ENCODE measurements at regions of chr11 and their contacts with region 1.

Region 1: GRCh38 chr11:60855726-60856633 is at the start of gene PTGDR2:
- DNase-seq: peak; percentile 71
- ATAC-seq: peak; percentile 83
- H3K4me3 ChIP-seq: peak within 1 kb of the TSS; percentile 21 to 49 (median 41)
- H3K27ac ChIP-seq: peak within 1 kb of the TSS; percentile 72
- H3K4me1 ChIP-seq: peaks cover 67% of the 10 kb centered on the region
- H3K27me3 ChIP-seq: no peaks in the 10 kb centered on the region
- CTCF ChIP-seq: 0 out of 2 replicates have a peak, but pooled peaks have one; percentile 5
- EP300 ChIP-seq: peak in 1 of 2 experiments; percentile 22; a peak in 1 of 4 replicates
- POLR2A ChIP-seq: 0 out of 4 replicates have a peak, but pooled peaks of 1 of the 2 experiments have one; percentile 29
- RAD21 ChIP-seq: no peak
- total RNA-seq, gene PTGDR2: 1.0 and 2.5 TPM in 2 replicates

Region 2: DNA sequence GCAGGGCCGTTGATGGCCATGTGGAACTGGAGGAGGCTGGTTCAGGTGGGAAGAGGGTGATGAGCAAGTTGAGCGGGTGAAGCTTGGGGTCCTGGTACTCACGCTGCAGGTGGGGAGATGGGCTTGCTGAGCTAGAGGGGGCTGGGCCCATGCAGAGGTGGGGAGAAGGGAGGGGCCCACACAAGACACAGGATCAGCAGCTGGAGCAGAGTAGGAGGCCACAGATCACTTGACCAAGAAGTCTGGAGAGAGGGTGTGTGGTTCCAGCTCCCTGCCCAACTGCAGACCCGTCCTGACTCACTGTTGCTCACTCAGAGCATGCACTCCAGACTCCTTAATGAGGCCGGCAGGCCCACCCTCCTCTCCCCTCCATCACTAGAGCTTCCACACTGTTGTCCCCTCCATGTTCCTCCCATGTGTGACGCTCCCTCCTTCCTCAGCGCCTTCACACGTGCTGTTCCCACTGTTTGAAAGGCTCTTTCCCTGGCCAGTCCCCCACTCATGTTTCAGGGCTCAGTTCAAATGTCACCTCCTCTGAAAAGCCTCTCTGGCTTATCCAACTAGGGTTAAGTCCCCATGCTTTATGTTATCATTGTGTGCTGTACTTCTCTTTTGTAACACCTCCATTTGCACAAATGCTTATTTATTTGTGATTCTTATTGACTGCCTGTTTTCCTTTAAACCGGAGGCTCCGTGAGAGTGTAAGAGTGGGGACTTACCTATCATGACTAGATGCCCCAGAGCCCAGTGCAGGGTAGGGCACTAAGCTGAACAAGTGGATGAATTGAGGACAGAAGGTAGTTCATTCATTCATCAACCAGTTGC is 11.7 kb before region 1 on chr11:
- CTCF ChIA-PET with region 1: no interaction called
- POLR2A ChIA-PET with region 1: interaction called, 26 read pairs
- in situ Hi-C with region 1: no loop called
- intact Hi-C with region 1: loop called (anchors 1 kb)
- DNase-seq: no peak
- ATAC-seq: peak; percentile 53
- H3K4me3 ChIP-seq: peak overlapping the region; percentile 80 to 97 (median 88)
- H3K27ac ChIP-seq: peak overlapping the region; percentile 68
- H3K4me1 ChIP-seq: peaks cover 41% of the 10 kb centered on the region
- H3K27me3 ChIP-seq: no peaks in the 10 kb centered on the region; a peak in 1 of 5 replicates
- CTCF ChIP-seq: no peak
- EP300 ChIP-seq: no peak
- POLR2A ChIP-seq: no peak
- RAD21 ChIP-seq: no peak

Region 3: GRCh38 chr11:60870276-60870675 is 14.3 kb after region 1 on chr11:
- CTCF ChIA-PET with region 1: no interaction called
- POLR2A ChIA-PET with region 1: no interaction called
- in situ Hi-C with region 1: no loop called
- intact Hi-C with region 1: no loop called
- DNase-seq: no peak
- ATAC-seq: no peak
- H3K4me3 ChIP-seq: no peak overlapping the region
- H3K27ac ChIP-seq: no peak overlapping the region
- H3K4me1 ChIP-seq: peaks cover 48% of the 10 kb centered on the region
- H3K27me3 ChIP-seq: peaks cover 0 to 5% of the 10 kb centered on the region in 2 experiments; a peak in 1 of 5 replicates
- CTCF ChIP-seq: no peak
- EP300 ChIP-seq: no peak
- POLR2A ChIP-seq: no peak
- RAD21 ChIP-seq: no peak

Region 4: GRCh38 chr11:60880643-60881282 is 24.8 kb after region 1 on chr11:
- CTCF ChIA-PET with region 1: no interaction called
- POLR2A ChIA-PET with region 1: interaction called, 5 read pairs
- in situ Hi-C with region 1: no loop called
- intact Hi-C with region 1: loop called (anchors 1 kb)
- DNase-seq: peak; percentile 96
- ATAC-seq: peak; percentile 100
- H3K4me3 ChIP-seq: 0 out of 6 replicates have a peak overlapping the region, but pooled peaks of 1 of the 3 experiments have one; percentile 11
- H3K27ac ChIP-seq: peak overlapping the region; percentile 16
- H3K4me1 ChIP-seq: peaks cover 25% of the 10 kb centered on the region
- H3K27me3 ChIP-seq: no peaks in the 10 kb centered on the region
- CTCF ChIP-seq: 0 out of 2 replicates have a peak, but pooled peaks have one; percentile 17
- EP300 ChIP-seq: peak; percentile 66 to 89; a peak in 3 of 4 replicates
- POLR2A ChIP-seq: no peak
- RAD21 ChIP-seq: no peak

Measured in HepG2 (cell line).